ENCODE measurements at regions of chr1 and their contacts with region 1.

Region 1: DNA sequence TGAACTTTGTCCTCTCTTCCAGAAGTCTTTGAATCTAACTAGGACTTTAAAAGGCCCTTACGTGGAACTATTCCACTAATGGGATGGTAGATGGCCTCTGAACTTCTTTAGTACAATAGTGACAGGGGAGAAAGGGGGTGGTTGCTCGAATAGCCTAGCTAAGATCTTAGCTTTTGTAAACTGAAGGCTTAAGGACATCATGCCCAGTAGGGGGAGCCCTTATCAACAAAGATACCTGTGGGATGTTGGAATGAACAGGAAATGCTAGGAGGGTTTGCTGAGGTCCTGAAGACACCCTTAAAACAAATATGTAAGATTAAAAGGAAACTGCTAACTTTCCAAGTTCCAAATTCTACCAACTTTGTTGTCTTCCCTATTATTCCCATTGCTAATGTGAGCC is 33.2 kb downstream of the NHLH2 start:
- DNase-seq: peak in 1 of 3 donors; percentile 92
- ATAC-seq: peak; percentile 68
- H3K4me3 ChIP-seq: no peak overlapping the region
- H3K4me1 ChIP-seq: peaks cover 13% of the 10 kb centered on the region
- CTCF ChIP-seq: no peak

Region 2: GRCh38 chr1:115980998-115981993 is 173.6 kb after region 1 on chr1:
- intact Hi-C with region 1: loop called in 1 of 2 experiments (anchors 5 kb)
- DNase-seq: peak in 1 of 3 donors; percentile 24
- ATAC-seq: peak; percentile 53
- H3K4me3 ChIP-seq: no peak overlapping the region
- H3K4me1 ChIP-seq: no peaks in the 10 kb centered on the region
- CTCF ChIP-seq: no peak

Measured in mucosa of descending colon (tissue), 3 donors.